ENCODE measurements at regions of chr6 and their contacts with region 1.

Region 1: DNA sequence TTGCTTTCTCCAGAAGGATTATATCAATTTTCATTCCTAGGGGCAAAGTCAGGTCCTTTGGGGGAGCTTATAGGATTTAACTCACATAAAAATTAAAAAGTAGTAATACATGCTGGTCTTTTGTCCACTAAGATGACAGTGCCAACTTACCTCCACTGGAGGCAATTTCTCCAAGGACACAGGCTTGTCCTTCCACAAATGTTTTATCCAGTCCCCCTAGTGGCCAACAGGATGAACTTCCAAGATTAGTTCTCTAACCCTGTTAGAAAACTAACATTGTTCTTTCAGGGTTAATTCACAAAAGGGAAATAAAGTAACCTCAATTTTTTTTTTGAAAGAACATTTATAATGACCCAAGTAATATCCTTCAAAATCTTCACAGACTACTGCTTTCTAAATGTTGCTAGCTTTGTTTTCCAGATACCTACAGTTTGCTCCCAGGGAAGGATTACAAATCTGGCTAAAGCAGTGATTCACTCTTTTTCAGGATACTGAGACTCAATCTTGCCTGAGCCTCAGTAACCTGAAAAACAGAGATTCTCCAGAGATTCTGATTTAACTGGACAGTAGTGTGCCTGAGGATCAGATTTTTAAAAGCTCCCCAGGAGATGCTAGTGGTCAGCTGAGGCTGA is 31.7 kb upstream of the UBR2 start:
- DNase-seq: peak in 1 of 3 donors; percentile 11
- ATAC-seq: peak in 1 of 2 donors; percentile 68
- H3K4me3 ChIP-seq: no peak overlapping the region
- H3K27ac ChIP-seq: no peak overlapping the region
- H3K4me1 ChIP-seq: peaks cover 2% of the 10 kb centered on the region
- H3K27me3 ChIP-seq: no peaks in the 10 kb centered on the region

Region 2: GRCh38 chr6:42239351-42240055 is 292.7 kb before region 1 on chr6:
- intact Hi-C with region 1: loop called in 1 of 4 experiments (anchors 10 kb)
- DNase-seq: no peak
- ATAC-seq: peak; percentile 31 to 45
- H3K4me3 ChIP-seq: no peak overlapping the region
- H3K27ac ChIP-seq: no peak overlapping the region
- H3K4me1 ChIP-seq: no peaks in the 10 kb centered on the region
- H3K27me3 ChIP-seq: no peaks in the 10 kb centered on the region

Region 3: DNA sequence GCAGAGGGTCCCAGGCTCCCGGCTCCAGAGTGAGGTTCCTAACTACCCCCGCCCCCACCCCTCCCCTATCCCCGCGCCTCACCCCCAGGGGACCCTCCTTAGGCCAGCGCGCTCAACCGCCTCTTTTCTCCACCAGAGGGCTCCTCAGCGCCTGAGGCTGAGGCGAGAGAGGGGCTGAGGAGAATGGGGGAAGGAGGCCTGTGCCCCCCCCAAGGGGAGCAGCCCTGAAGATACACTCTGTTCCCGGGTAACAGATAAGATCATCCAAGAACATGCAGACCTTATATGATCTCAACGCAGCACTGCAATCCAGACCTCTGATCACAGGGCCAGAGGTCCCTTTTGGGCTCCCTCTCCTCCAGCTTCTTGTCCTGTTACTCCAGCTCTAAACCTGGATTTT is 271.2 kb before region 1 on chr6:
- intact Hi-C with region 1: loop called in 2 of 4 experiments (anchors 10 kb)
- DNase-seq: peak; percentile 62 to 81 (median 76)
- ATAC-seq: peak; percentile 71 to 79
- H3K4me3 ChIP-seq: no peak overlapping the region
- H3K27ac ChIP-seq: no peak overlapping the region
- H3K4me1 ChIP-seq: peaks cover 7% of the 10 kb centered on the region
- H3K27me3 ChIP-seq: no peaks in the 10 kb centered on the region

Measured in right cardiac atrium (tissue), 5 donors.